Dorsolateral prefrontal cortex (tissue), 120 donors: ENCODE measurements at regions of chr19 and their contacts with region 1.

Region 1: DNA sequence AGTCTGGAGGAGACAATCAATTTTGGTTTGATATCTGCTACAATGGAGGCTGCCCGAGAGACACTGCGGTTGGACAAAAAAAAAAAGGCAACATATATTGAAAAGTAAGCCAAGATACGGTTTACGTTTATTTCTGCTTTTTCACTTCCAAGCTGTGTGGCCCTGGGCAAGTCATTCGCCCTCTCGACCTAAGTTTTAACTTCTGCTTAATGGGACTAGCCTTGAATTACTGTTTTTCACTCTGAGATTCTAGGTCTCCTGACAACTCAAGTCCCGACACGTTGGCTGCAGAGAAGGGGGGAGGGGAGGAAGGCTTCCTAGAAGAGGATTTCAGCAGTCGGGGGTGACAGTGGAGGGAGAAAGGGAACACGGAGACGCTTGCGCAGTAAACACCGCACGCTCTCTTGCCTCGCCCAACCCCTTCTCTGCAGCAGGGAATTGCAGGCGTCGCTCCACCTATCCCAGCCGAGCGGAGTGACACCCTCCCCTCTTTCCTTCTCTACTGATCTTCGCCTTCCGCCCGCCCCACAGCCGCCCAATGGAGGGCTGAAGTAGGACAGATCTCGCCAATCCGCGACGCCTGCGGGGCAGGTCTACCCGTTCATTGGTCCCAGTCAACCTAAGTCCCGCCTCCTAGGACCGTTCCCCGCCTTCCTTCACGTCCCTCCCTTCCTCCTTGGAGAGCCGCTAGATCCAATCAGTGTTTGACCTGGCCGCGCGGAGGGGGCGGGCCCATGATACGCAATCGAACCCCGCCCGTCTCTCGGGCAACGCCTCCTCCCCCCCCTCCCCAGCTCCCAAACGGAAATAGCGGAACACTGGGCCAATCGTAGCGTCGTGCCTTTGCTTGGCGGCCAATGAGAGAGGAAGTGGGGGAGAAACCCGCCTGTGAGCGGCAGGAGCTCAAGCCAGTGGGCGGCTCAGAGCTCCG is 529 bp upstream of the AP2A1 start:
- DNase-seq: peak; percentile 99 to 100 (median 100)
- H3K4me3 ChIP-seq: peak overlapping the region; percentile 37 to 94 (median 81)
- H3K27ac ChIP-seq: peak overlapping the region; percentile 66 to 98 (median 90)
- H3K27me3 ChIP-seq: no peaks in the 10 kb centered on the region
- CTCF ChIP-seq: peak in 23 of 56 donors; percentile 5 to 47 (median 22)

Region 2: DNA sequence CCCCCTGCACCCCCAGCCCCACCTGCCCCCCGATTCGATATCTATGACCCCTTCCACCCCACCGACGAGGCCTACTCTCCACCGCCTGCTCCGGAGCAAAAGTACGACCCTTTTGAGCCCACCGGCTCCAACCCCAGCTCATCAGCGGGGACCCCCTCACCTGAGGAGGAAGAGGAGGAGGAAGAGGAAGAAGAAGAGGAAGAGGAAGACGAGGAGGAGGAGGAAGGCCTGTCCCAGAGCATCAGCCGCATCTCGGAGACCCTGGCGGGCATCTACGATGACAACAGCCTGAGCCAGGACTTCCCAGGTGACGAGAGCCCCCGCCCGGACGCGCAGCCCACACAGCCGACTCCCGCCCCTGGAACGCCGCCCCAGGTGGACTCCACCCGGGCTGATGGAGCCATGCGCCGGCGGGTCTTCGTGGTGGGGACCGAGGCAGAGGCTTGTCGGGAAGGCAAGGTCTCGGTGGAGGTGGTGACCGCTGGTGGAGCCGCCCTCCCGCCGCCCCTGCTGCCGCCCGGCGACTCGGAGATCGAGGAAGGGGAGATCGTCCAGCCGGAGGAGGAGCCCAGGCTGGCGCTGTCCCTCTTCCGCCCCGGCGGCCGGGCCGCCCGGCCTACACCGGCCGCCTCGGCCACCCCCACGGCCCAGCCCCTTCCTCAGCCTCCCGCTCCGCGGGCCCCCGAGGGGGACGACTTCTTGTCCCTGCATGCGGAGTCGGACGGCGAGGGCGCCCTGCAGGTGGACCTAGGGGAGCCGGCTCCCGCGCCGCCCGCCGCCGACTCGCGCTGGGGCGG is 115.0 kb before region 1 on chr19:
- intact Hi-C with region 1: no loop called
- DNase-seq: no peak
- H3K4me3 ChIP-seq: no peak overlapping the region
- H3K27ac ChIP-seq: no peak overlapping the region
- H3K27me3 ChIP-seq: no peaks in the 10 kb centered on the region
- CTCF ChIP-seq: no peak

Region 3: DNA sequence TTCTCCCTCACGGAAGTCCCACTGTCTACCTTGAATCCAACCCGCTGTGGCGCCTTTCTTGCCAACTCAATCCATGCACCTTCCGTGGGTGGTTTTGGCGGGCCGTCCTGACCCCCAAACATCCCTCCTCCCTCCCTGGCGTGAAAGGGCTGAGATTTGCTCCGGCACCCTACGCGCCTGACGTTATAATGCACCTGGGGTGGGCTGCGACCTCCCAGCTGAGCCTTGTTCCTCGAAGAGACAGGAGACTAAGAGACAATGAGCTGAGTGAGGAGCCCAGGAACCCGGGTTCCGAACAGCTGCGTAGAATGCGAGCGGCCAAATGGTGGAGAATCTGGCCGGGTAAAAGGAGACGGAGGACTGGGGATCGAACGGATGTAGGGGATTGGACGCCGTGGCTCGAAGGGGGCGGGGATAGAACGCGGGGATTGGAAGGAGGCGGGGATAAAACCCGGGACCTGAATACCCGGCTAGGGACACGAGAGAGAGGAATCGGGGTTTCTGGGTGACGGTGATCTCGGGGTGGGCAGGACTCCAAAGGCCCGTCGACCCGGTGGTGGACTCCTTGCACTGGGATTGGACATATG is 75.5 kb before region 1 on chr19 and contains the start of gene CPT1C:
- intact Hi-C with region 1: loop called (anchors 2 to 5 kb)
- DNase-seq: peak; percentile 74 to 96 (median 92)
- H3K4me3 ChIP-seq: peak within 1 kb of the TSS; percentile 54 to 91 (median 71)
- H3K27ac ChIP-seq: peak within 1 kb of the TSS; percentile 7 to 95 (median 90)
- H3K27me3 ChIP-seq: no peaks in the 10 kb centered on the region
- CTCF ChIP-seq: peak in 2 of 56 donors; percentile 14 to 15
- total RNA-seq, gene CPT1C: 55.9 to 163 (median 105) TPM

Region 4: DNA sequence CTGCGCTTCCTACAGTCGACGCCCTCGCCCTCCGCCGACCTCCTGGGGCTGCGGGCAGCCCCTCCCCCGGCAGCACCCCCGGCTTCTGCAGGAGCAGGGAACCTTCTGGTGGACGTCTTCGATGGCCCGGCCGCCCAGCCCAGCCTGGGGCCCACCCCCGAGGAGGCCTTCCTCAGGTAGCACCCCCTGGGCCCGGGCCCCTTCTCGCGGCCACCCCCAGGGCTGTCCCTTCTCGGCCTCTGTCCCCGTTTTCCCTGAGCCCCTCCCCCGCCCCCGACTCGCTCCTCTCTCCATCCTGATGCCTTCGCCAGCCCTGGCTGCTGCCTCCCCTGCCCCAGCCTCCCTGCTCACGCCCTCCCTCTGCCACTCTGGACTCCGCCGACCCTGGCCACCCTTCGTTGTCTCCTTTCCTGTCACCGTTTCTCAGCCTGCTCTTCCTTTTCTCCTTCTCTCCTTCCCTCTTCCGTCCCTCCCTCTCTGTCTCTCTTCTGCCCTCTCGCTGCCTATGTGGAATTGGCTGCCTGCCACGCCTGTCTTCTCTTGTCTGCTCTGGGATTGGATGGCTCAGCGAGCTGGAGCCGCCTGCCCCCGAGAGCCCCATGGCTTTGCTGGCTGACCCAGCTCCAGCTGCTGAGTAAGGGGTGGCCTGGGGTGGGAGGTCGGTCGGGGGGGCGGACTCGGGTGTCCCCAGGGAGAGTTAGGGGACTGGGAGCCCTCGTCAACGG is 35.9 kb after region 1 on chr19:
- intact Hi-C with region 1: loop called (anchors 5 kb)
- DNase-seq: peak; percentile 93 to 99 (median 96)
- H3K4me3 ChIP-seq: peak overlapping the region; percentile 24 to 69 (median 51)
- H3K27ac ChIP-seq: peak overlapping the region in 56 of 59 donors; percentile 21 to 87 (median 74)
- H3K27me3 ChIP-seq: no peaks in the 10 kb centered on the region
- CTCF ChIP-seq: peak in 53 of 56 donors; percentile 29 to 71 (median 53)

Region 5: GRCh38 chr19:49808711-49809159 is 42.5 kb after region 1 on chr19:
- intact Hi-C with region 1: loop called (anchors 5 kb)
- DNase-seq: peak; percentile 75 to 91 (median 86)
- H3K4me3 ChIP-seq: peak overlapping the region; percentile 46 to 93 (median 78)
- H3K27ac ChIP-seq: peak overlapping the region in 58 of 59 donors; percentile 9 to 93 (median 79)
- H3K27me3 ChIP-seq: no peaks in the 10 kb centered on the region
- CTCF ChIP-seq: peak in 1 of 56 donors; percentile 7

Region 6: DNA sequence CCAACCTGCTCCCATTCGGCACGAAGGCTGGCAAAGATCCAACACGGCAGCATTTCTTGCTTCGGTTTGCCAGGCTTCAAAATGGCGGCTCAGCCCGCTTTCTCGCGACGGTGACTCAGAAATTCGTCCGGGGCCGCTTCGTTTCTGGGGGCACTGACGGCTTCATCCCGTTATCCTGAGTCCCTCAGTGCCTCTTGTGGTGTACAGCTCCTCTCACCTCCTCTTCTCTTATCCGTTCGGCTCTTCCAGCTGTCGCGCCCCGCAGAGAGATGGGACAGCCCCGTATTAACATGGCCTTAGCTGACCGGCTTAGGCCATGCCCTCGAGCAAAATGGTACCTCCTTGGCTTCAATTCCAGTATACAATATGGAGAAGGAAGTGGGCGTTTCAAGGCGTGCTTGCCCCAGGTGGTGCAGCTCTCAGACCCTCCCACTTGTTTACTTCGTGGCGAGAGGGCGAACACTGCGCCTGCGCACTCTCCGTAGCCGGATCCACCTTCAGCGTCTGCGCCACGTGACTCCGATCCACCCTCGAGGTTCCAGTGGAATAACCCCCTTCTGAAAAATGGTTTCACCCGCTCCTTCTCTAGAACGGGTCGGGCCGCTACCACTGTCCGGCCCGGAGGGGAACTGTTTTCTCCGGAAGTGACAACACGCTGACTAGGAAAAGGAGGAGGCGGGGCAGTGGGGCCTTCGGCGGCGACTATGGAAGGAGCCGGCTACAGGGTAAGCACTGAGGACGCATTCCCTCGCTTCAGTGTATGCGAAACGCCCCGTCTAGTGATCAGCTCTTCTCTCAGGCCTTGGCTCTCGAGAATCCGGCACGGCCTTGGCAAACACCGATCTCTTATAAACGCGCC is 111.0 kb after region 1 on chr19 and contains the starts of genes AKT1S1 and TBC1D17:
- intact Hi-C with region 1: loop called in 1 of 2 experiments (anchors 2 kb)
- DNase-seq: peak; percentile 98 to 100 (median 99)
- H3K4me3 ChIP-seq: peak within 1 kb of the TSS; percentile 71 to 100 (median 96)
- H3K27ac ChIP-seq: peak within 1 kb of the TSS; percentile 93 to 100 (median 100)
- H3K27me3 ChIP-seq: no peaks in the 10 kb centered on the region
- CTCF ChIP-seq: peak in 4 of 56 donors; percentile 6 to 13 (median 11)
- total RNA-seq, gene AKT1S1: 19.9 to 42.2 (median 27.8) TPM
- total RNA-seq, gene TBC1D17: 61.4 to 116 (median 85.9) TPM

Region 7: GRCh38 chr19:50003810-50004419 is 237.6 kb after region 1 on chr19:
- intact Hi-C with region 1: no loop called
- DNase-seq: peak in 5 of 10 donors; percentile 36 to 74 (median 59)
- H3K4me3 ChIP-seq: no peak overlapping the region
- H3K27ac ChIP-seq: peak overlapping the region in 8 of 59 donors; percentile 6 to 71 (median 31)
- H3K27me3 ChIP-seq: no peaks in the 10 kb centered on the region
- CTCF ChIP-seq: no peak